PC-9 (cell line): ENCODE measurements at regions of chr1 and their contacts with region 1.

Region 1: GRCh38 chr1:47164552-47164951 is 25.3 kb downstream of the PDZK1IP1 start:
- DNase-seq: no peak
- H3K4me3 ChIP-seq: no peak overlapping the region
- H3K27ac ChIP-seq: no peak overlapping the region
- H3K4me1 ChIP-seq: no peaks in the 10 kb centered on the region
- H3K27me3 ChIP-seq: no peaks in the 10 kb centered on the region
- CTCF ChIP-seq: no peak

Region 2: DNA sequence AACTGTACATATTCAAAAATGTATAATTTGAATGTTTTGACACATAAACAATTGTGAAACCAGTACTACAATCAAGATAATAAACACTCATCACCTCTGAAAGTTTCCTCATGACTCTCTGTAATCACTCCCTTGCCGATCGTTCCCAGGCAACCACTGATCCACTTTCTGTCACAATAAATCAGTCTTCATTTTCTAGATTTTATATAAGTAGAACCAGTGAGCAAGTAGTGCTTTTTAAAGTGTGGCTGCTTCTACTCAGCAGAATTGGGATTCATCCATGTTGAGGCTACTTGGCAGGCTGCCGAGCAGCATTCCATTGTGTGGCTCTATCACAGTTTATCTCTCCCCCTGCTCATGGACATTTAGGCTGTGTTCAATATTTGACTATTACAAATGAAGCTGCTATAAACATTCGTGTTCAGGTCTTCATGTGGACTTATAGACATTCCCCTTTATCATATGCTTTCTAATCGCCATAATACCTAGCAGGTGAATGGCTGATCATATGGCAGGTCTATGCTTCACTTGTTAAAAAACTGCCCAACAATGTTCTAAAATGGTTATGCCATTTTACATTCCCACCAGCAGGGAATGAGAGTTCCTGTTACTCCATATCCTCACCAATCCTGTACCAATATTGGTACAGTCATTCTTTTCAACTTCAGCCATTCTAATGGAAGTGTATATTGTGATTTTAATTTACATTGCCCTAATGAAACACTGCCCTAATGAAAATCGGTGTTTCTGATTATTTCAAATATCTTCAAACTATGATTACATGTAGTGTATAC is 472.4 kb before region 1 on chr1:
- CTCF ChIA-PET with region 1: interaction called, 12 read pairs
- POLR2A ChIA-PET with region 1: no interaction called
- intact Hi-C with region 1: no loop called
- DNase-seq: no peak
- H3K4me3 ChIP-seq: no peak overlapping the region
- H3K27ac ChIP-seq: no peak overlapping the region
- H3K4me1 ChIP-seq: peaks cover 6% of the 10 kb centered on the region; the same call in 1 of the 2 replicates
- H3K27me3 ChIP-seq: no peaks in the 10 kb centered on the region
- CTCF ChIP-seq: peak; percentile 36; the same call in 1 of the 2 replicates

Region 3: GRCh38 chr1:47189844-47190508 is 25.4 kb after region 1 on chr1 and contains the start of gene PDZK1IP1:
- CTCF ChIA-PET with region 1: no interaction called
- POLR2A ChIA-PET with region 1: no interaction called
- intact Hi-C with region 1: no loop called
- DNase-seq: peak in 1 of 2 experiments; percentile 82
- H3K4me3 ChIP-seq: no peak within 1 kb of the TSS
- H3K27ac ChIP-seq: no peak within 1 kb of the TSS
- H3K4me1 ChIP-seq: no peaks in the 10 kb centered on the region
- H3K27me3 ChIP-seq: no peaks in the 10 kb centered on the region
- CTCF ChIP-seq: no peak
- total RNA-seq, gene PDZK1IP1: 6.2 and 8.5 TPM in 2 replicates